Body of pancreas (tissue), 4 donors: ENCODE measurements at regions of chr17 and their contacts with region 1.

Region 1: GRCh38 chr17:7484919-7485377 is 782 bp downstream of the POLR2A start:
- DNase-seq: no peak
- ATAC-seq: no peak
- H3K4me3 ChIP-seq: peak overlapping the region; percentile 11 to 28
- H3K27ac ChIP-seq: peak overlapping the region in 3 of 4 donors; percentile 97 to 100 (median 98)
- H3K4me1 ChIP-seq: peaks cover 51% of the 10 kb centered on the region
- H3K27me3 ChIP-seq: no peaks in the 10 kb centered on the region
- CTCF ChIP-seq: peak in 2 of 7 experiments; percentile 19 to 29
- POLR2A ChIP-seq: no peak

Region 2: DNA sequence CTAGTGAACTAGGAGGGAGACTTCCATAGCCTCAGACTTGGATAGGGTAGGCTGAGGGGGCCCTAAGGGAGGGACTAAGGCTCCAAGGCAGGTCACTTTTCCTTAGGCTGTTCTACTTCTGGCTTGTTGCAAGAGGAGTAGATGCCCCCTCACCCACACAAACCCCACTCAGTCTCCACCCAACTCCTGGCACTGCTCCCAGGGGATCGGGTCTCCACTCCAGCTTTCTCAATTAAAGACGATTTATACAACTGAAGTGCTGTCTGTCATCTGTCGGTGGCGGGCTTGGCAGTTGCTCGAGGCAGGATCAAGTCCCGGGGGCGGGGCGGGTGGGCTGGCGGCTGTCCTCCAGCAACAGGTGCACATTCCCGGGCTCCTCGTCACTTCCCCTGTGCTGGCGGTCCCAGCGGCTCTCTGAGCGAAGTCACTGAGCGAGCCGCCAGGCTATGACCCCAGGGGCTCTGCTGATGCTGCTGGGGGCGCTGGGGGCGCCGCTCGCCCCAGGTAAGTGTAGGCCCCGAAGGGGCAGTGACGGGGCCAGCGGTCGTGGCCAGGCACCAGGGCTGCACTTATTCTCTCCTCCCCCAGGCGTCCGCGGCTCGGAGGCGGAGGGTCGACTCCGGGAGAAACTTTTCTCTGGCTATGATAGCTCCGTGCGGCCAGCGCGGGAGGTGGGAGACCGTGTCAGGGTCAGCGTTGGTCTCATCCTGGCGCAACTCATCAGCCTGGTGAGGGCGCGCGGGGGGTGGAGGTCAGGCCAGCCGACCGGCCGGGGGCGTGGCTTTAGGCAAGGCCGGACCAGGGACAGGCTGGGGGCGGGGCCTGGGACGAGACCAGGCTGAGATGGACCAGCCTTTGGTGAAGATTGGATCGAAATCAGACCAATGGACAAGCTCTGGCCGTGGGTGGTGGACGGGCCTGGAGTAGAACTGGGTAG is 40.0 kb before region 1 on chr17 and contains the start of gene CHRNB1:
- intact Hi-C with region 1: loop called (anchors 5 kb)
- DNase-seq: peak; percentile 82 to 91 (median 88)
- ATAC-seq: peak; percentile 87
- H3K4me3 ChIP-seq: peak within 1 kb of the TSS; percentile 3 to 35
- H3K27ac ChIP-seq: peak within 1 kb of the TSS; percentile 33 to 75 (median 51)
- H3K4me1 ChIP-seq: peaks cover 22% of the 10 kb centered on the region
- H3K27me3 ChIP-seq: no peaks in the 10 kb centered on the region
- CTCF ChIP-seq: peak in 4 of 7 experiments; percentile 7 to 40 (median 18)
- POLR2A ChIP-seq: peak in 2 of 3 donors; percentile 28 to 30
- total RNA-seq, gene CHRNB1: 2.6 to 8.8 TPM